ENCODE measurements at regions of chr14 and their contacts with region 1.

Region 1: GRCh38 chr14:22994762-22995275 is 12.5 kb upstream of the AJUBA start:
- DNase-seq: no peak
- H3K4me3 ChIP-seq: no peak overlapping the region
- H3K27ac ChIP-seq: no peak overlapping the region
- H3K4me1 ChIP-seq: peaks cover 0 to 5% (median 2%) of the 10 kb centered on the region in 4 experiments; a peak in 2 of 7 replicates
- H3K27me3 ChIP-seq: no peaks in the 10 kb centered on the region
- CTCF ChIP-seq: peak; percentile 38 to 64 (median 46); a peak in 3 of 4 replicates
- EP300 ChIP-seq: no peak
- POLR2A ChIP-seq: no peak
- RAD21 ChIP-seq: peak; percentile 55 to 72

Region 2: DNA sequence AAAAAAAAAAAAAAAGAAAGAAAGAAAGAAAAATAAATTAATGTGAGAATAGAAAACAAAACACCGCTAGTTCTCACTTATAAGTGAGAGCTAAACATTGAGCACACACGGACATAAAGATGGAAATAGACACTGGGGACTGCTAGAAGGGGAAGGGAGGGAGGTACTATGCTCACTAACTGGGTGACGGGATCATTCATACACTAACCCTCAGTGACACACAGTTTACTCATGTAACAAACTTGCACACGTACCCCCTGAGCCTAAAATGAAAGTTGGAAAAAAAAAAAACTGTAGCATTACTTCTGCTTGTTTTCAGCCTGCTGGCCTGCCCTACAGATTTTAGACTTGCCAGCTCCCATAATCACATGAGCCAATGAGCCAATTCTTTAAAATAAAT is 55.1 kb before region 1 on chr14:
- CTCF ChIA-PET with region 1: interaction called, 23 read pairs
- POLR2A ChIA-PET with region 1: interaction called, 3 read pairs
- DNase-seq: no peak
- H3K4me3 ChIP-seq: no peak overlapping the region
- H3K27ac ChIP-seq: no peak overlapping the region
- H3K4me1 ChIP-seq: no peaks in the 10 kb centered on the region
- H3K27me3 ChIP-seq: no peaks in the 10 kb centered on the region
- CTCF ChIP-seq: no peak
- EP300 ChIP-seq: no peak
- POLR2A ChIP-seq: no peak
- RAD21 ChIP-seq: no peak

Region 3: DNA sequence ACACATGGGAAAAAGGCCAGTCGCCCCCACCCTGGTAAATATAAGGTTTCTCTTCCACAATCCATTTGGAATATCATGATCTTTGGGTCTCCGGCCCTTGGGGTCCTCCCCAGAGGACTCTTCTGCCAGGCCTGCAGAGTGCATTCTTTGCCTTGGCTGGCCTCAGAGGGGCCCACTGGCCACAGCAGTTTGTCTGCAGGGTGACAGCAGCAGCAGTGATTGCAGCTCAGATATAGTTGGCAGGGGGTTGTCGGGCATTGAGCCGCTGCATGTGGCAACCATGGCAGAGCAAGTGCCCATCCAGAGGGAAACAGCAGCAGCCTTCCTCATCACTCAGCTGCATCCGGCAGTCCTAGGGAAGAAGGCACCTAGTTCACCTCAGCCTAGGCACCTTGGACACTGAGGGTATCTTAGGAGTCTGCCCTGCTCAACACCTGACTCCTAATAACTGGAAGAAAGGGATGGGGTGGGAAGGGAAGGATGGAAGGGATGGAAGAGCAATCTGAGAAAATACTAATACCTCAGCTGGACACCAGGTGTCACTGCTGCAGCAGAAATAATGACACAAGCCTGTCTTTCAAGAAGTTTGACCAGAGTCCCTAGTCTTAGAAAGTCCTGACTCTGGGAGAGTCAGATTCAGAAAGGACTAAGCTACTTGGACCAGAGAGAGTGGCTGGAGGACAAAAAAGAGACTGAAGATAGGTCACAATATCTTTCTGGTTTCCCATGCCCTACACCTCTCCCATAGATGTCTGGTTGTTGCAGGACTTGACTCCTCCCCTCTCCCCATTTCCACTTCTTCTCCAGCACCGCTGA is 21.4 kb before region 1 on chr14:
- CTCF ChIA-PET with region 1: interaction called, 175 read pairs
- POLR2A ChIA-PET with region 1: interaction called, 133 read pairs
- DNase-seq: peak in 1 of 2 experiments; percentile 66
- H3K4me3 ChIP-seq: no peak overlapping the region
- H3K27ac ChIP-seq: no peak overlapping the region
- H3K4me1 ChIP-seq: peaks cover 13 to 20% (median 18%) of the 10 kb centered on the region in 4 experiments
- H3K27me3 ChIP-seq: no peaks in the 10 kb centered on the region
- CTCF ChIP-seq: peak in 2 of 3 experiments; percentile 75 to 76; a peak in 3 of 4 replicates
- EP300 ChIP-seq: no peak
- POLR2A ChIP-seq: no peak; a peak in 1 of 3 replicates
- RAD21 ChIP-seq: peak; percentile 84 to 88

Region 4: GRCh38 chr14:23015618-23016017 is 20.8 kb after region 1 on chr14:
- CTCF ChIA-PET with region 1: interaction called, 57 read pairs
- POLR2A ChIA-PET with region 1: interaction called, 3 read pairs
- DNase-seq: no peak
- H3K4me3 ChIP-seq: no peak overlapping the region
- H3K27ac ChIP-seq: no peak overlapping the region
- H3K4me1 ChIP-seq: 0 out of 7 replicates have a peak, but pooled peaks cover 0 to under 1% (median 0%) of the 10 kb centered on the region in 4 experiments
- H3K27me3 ChIP-seq: no peaks in the 10 kb centered on the region
- CTCF ChIP-seq: no peak
- EP300 ChIP-seq: no peak
- POLR2A ChIP-seq: no peak
- RAD21 ChIP-seq: no peak

Region 5: GRCh38 chr14:23034483-23035302 is 39.9 kb after region 1 on chr14 and contains the start of gene PSMB5:
- CTCF ChIA-PET with region 1: interaction called, 785 read pairs
- POLR2A ChIA-PET with region 1: interaction called, 17 read pairs
- DNase-seq: peak; percentile 80 to 89
- H3K4me3 ChIP-seq: peak within 1 kb of the TSS; percentile 79 to 95 (median 88)
- H3K27ac ChIP-seq: peak within 1 kb of the TSS; percentile 98
- H3K4me1 ChIP-seq: peaks cover 0 to 3% (median 1%) of the 10 kb centered on the region in 4 experiments; a peak in 2 of 7 replicates
- H3K27me3 ChIP-seq: no peaks in the 10 kb centered on the region
- CTCF ChIP-seq: no peak
- EP300 ChIP-seq: no peak
- POLR2A ChIP-seq: peak; percentile 75 to 89
- RAD21 ChIP-seq: no peak
- total RNA-seq, gene PSMB5: 246 and 254 TPM in 2 replicates

Region 6: GRCh38 chr14:23364164-23365015 is 369.6 kb after region 1 on chr14:
- CTCF ChIA-PET with region 1: no interaction called
- POLR2A ChIA-PET with region 1: no interaction called
- DNase-seq: peak in 1 of 2 experiments; percentile 64
- H3K4me3 ChIP-seq: peak overlapping the region; percentile 69 to 79 (median 77)
- H3K27ac ChIP-seq: 0 out of 2 replicates have a peak overlapping the region, but pooled peaks have one; percentile 27
- H3K4me1 ChIP-seq: peaks cover 2 to 22% (median 14%) of the 10 kb centered on the region in 4 experiments; a peak in 6 of 7 replicates
- H3K27me3 ChIP-seq: peaks cover 0 to 12% (median 8%) of the 10 kb centered on the region in 4 experiments; a peak in 5 of 7 replicates
- CTCF ChIP-seq: no peak
- EP300 ChIP-seq: no peak; a peak in 1 of 3 replicates
- POLR2A ChIP-seq: peak in 1 of 2 experiments; percentile 44; a peak in 1 of 3 replicates
- RAD21 ChIP-seq: no peak